PC-9 (cell line): ENCODE measurements at regions of chrX and their contacts with region 1.

Region 1: DNA sequence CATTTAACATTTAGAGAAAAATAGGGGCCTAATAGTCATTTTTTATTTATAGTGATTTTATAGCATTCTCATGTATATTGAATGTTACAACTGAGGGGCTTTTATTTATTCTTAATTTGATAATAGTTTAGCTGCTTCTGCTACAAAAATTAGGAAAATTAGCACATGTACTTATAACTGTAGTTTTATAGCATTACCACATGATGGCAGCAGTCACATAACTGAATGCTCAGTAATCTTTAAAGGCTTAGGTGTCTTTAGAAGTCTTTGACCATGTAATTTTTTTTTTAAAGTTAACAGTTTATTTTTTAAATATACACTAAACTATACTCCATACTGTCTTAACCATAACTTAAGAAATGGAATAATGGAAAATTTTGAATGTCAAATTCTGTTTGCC is 136.6 kb downstream of the STAG2 start:
- DNase-seq: no peak
- H3K4me3 ChIP-seq: no peak overlapping the region
- H3K27ac ChIP-seq: no peak overlapping the region
- H3K4me1 ChIP-seq: no peaks in the 10 kb centered on the region
- H3K27me3 ChIP-seq: no peaks in the 10 kb centered on the region
- CTCF ChIP-seq: peak; percentile 72

Region 2: DNA sequence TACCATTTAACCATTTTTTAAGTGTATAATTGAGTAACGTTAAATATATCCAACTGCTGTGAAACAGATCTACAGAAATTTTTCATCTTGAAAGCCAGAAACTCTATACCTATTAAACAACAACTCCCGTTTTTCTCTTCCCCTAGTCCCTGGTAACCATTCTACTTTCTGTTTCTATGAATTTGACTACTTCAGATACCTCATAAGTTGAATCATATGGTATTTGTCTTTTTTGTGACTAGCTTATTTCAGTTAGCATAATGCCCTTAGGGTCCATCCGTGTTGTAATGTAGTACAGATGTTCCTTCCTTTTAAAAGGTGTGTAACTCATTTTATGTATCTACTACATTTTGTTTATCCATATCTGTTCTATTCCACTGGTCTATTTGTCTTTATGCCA is 87.9 kb before region 1 on chrX:
- CTCF ChIA-PET with region 1: no interaction called
- POLR2A ChIA-PET with region 1: no interaction called
- intact Hi-C with region 1: no loop called
- DNase-seq: no peak
- H3K4me3 ChIP-seq: no peak overlapping the region
- H3K27ac ChIP-seq: no peak overlapping the region
- H3K4me1 ChIP-seq: no peaks in the 10 kb centered on the region
- H3K27me3 ChIP-seq: no peaks in the 10 kb centered on the region
- CTCF ChIP-seq: no peak

Region 3: DNA sequence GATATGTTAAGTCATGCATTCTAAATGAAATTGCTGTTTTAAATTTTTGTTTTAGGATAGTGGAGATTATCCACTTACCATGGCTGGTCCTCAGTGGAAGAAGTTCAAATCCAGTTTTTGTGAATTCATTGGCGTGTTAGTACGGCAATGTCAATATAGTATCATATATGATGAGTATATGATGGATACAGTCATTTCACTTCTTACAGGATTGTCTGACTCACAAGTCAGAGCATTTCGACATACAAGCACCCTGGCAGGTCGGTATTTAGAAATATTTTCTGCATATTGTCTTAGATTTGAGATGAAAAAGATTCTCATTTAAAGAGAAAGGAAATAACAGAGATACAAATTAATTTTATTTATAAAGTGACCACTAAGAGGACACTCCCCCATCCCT is 53.0 kb before region 1 on chrX:
- CTCF ChIA-PET with region 1: no interaction called
- POLR2A ChIA-PET with region 1: no interaction called
- intact Hi-C with region 1: loop called (anchors 5 kb)
- DNase-seq: no peak
- H3K4me3 ChIP-seq: no peak overlapping the region
- H3K27ac ChIP-seq: no peak overlapping the region
- H3K4me1 ChIP-seq: no peaks in the 10 kb centered on the region
- H3K27me3 ChIP-seq: no peaks in the 10 kb centered on the region
- CTCF ChIP-seq: no peak